HEK293T (cell line): ENCODE measurements at regions of chr12 and their contacts with region 1.

Region 1: DNA sequence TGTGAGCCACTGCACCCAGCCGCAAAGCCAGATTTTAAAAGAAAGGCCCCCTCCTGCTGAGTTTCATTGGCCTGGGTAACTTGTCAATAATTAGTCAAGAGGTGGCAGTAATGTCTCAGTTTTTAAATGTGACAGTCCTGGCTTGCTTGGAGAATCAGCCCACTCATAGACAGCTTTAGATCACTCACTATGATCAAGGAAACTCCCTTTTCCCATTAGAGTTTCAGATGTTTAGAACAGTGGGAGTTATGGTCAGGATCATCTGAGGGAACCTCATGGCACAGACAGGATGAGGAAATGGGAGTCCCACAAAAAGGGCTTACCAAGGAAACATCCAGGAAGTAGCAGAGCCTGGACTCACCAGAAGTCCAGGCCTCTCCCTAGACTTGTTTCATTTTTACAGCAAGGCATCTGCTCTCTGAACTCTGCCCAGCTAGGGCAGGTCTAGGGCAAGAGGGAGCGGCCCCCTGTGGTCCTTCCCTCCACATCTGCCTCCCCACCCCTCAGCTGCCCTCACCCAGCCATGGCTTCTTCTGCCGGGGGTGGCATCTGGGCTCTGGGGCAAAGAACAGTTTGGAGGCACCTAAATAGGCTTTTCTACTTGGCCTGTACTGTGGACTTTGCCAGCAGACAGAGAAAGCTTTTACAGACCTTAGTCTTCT is 11.2 kb downstream of the BCL2L14 start:
- DNase-seq: peak; percentile 31

Region 2: GRCh38 chr12:12334367-12335040 is 252.5 kb after region 1 on chr12:
- CTCF ChIA-PET with region 1: interaction called, 17 read pairs
- POLR2A ChIA-PET with region 1: no interaction called
- DNase-seq: peak; percentile 77